Activated CD4-positive, alpha-beta memory T cell treated with anti-CD3 and anti-CD28 coated beads, Interleukin-2, amount 10 ng/mL, durations not matched to agents 7 days and 5 days (primary cell): ENCODE measurements at regions of chr4 and their contacts with region 1.

Region 1: DNA sequence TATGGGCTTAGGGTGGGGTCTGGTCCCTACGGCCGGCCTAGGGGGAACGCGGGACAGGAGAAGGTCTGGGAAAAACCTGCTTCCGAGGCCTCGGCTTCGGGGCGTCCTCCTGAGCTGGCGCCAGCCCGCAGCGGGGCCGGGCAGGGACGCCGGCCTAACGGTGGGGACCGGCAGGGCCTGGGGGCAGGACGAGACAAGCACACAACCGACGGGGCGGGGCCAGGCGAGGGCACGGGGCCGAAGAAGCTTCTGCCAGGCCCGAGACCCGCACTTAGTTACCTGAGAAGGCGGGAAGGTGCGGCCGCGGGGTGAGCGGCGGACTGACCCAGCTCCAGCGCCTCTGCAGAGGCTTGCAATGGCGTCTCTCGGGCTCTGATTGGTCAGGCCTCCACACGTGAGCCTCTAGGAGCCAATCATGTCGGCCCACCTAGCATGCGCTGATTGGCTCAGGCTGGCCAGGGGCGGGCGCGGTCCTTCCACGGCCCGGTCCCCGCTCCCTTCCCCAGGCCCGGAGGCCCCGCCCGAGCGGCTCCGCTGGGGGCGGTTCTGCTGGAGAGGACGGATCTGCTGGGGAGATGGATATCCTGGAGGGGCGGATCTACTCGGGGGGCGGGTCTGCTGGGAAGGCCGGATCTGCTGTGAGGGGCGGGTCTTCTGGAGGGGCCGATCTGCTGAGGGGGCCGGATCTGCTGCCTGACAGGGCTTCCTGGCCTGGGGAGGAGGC is 44.3 kb downstream of the CPLX1 start:
- DNase-seq: peak; percentile 100
- H3K4me3 Mint-ChIP-seq: peak overlapping the region; percentile 84
- H3K27ac Mint-ChIP-seq: peak overlapping the region; percentile 88
- H3K4me1 Mint-ChIP-seq: peaks cover 54% of the 10 kb centered on the region
- H3K27me3 Mint-ChIP-seq: peaks cover 16% of the 10 kb centered on the region

Region 2: DNA sequence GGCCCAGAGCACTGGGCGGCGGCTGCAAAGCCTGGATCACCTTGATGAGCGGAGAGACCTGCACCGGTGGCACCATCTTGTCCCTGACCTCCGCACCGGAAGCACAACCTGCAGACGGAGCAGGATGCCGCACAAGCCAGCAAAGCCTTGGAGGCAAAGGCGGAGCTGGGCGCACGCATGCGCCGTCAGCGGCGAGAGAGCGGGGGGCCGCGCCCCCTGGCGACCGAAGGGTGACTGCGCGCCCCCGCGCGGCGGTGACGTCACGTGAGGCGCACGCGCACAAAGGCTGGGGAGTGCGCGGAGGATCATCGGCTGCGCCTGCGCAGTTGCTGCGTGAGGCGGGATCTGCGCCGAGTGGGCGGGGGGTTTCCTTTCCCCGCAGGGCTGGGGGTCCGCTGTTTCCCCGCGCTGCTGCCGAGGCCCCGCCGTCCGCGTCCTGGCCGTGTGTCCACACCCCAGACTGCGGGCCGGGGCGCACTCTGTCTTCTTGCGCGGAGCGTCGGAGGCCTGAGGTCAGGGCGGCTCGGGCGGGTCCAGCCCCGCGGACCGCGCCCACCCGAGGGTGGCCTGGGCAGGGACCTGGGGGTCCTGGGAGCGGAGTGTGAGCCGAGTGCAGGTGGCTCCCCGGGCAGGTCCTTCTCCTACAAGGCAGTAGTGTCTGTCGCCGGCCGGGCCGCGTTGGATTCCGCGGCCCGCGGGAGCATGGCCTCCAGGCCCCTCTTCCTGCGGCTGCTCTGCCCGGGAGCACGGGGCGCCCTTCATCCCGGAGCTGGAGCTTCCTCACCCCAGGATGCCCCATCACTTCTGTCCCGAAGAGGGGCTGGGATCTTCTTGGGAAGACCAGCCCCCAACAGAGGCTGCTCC is 107.3 kb before region 1 on chr4 and contains the starts of genes ATP5ME and MYL5:
- CTCF ChIA-PET with region 1: interaction called, 4 read pairs
- POLR2A ChIA-PET with region 1: interaction called, 17 read pairs
- DNase-seq: peak; percentile 98
- H3K4me3 Mint-ChIP-seq: peak within 1 kb of the TSS; percentile 85
- H3K27ac Mint-ChIP-seq: peak within 1 kb of the TSS; percentile 80
- H3K4me1 Mint-ChIP-seq: peaks cover 13% of the 10 kb centered on the region
- H3K27me3 Mint-ChIP-seq: no peaks in the 10 kb centered on the region
- total RNA-seq, gene ATP5ME: 205 TPM
- total RNA-seq, gene MYL5: 14.0 to 16.2 TPM

Region 3: DNA sequence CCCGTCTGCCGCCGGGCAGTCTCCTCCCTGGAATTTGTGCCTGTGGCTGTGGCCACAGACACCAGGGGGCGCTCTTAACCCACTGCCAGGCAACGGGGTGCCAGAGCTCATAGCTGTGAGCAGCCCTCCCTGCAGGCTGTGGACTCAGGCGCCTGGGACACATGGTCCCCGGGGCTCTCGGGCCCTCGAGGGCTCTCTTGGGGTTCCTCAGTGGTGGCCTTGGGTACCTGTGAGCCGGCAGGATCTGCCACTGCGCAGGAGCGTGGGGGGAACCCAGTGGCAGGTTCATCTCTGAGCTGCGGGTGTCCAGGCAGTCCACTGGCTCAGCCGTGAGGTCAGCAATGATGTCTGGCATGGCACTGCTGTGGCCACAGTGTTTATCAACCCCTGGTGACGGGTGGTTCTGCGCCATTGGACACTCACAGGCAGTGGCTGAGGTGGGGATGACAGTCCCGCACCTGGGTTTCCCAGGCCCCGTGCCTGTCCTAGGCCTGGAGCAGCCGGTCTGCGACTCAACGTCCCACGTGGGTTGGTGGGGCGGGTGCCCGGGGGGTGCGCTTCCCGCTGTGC is 38.8 kb before region 1 on chr4:
- CTCF ChIA-PET with region 1: interaction called, 10 read pairs
- POLR2A ChIA-PET with region 1: interaction called, 6 read pairs
- DNase-seq: peak; percentile 78
- H3K4me3 Mint-ChIP-seq: no peak overlapping the region
- H3K27ac Mint-ChIP-seq: no peak overlapping the region
- H3K4me1 Mint-ChIP-seq: peaks cover 3% of the 10 kb centered on the region
- H3K27me3 Mint-ChIP-seq: no peaks in the 10 kb centered on the region

Region 4: DNA sequence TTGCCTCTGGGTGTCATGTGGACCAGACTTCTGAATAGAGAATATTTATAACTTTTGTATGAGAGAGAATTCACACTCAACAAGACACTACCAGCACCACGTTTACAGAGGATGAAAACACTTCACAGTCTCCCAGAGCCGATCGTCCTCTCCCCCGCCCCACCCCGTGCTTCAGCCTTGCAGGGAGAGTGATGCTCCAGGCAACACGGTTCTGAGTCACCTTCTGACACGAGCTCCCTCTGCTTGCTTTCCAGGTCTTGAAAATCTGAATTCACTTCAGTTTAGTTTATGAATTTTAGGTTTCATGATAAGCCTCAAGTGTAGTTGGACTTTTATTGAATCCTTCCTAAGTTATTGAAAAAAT is 15.5 kb before region 1 on chr4:
- CTCF ChIA-PET with region 1: no interaction called
- POLR2A ChIA-PET with region 1: interaction called, 27 read pairs
- DNase-seq: no peak
- H3K4me3 Mint-ChIP-seq: no peak overlapping the region
- H3K27ac Mint-ChIP-seq: peak overlapping the region; percentile 45
- H3K4me1 Mint-ChIP-seq: peaks cover 28% of the 10 kb centered on the region
- H3K27me3 Mint-ChIP-seq: no peaks in the 10 kb centered on the region

Region 5: GRCh38 chr4:793941-794621 is 12.4 kb after region 1 on chr4:
- CTCF ChIA-PET with region 1: interaction called, 3 read pairs
- POLR2A ChIA-PET with region 1: interaction called, 24 read pairs
- DNase-seq: no peak
- H3K4me3 Mint-ChIP-seq: no peak overlapping the region
- H3K27ac Mint-ChIP-seq: no peak overlapping the region
- H3K4me1 Mint-ChIP-seq: peaks cover 30% of the 10 kb centered on the region
- H3K27me3 Mint-ChIP-seq: peaks cover 36% of the 10 kb centered on the region

Region 6: DNA sequence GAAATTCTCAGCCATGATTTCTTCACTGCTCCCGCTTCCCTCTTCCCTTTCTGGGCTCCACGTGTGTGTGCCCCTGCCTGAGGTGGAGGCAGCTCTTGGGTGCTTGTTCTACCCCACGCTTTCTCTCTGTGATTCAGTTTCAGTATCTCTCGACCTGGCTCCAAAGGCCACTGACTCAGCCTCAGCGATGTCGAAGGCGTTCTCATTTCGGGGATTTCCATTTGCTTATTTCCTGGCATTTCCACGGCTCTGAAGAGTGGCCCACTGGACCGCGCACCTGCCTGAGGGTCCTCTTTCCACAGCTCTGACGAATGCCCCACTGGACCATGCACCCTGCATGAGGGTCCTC is 98.0 kb after region 1 on chr4:
- CTCF ChIA-PET with region 1: no interaction called
- POLR2A ChIA-PET with region 1: interaction called, 11 read pairs
- DNase-seq: peak; percentile 68
- H3K4me3 Mint-ChIP-seq: peak overlapping the region; percentile 71
- H3K27ac Mint-ChIP-seq: peak overlapping the region; percentile 100
- H3K4me1 Mint-ChIP-seq: peaks cover 31% of the 10 kb centered on the region
- H3K27me3 Mint-ChIP-seq: no peaks in the 10 kb centered on the region

Region 7: GRCh38 chr4:931960-932712 is 150.5 kb after region 1 on chr4 and contains the starts of genes GAK and TMEM175:
- CTCF ChIA-PET with region 1: interaction called, 3 read pairs
- POLR2A ChIA-PET with region 1: interaction called, 26 read pairs
- DNase-seq: peak; percentile 98
- H3K4me3 Mint-ChIP-seq: peak within 1 kb of the TSS; percentile 92
- H3K27ac Mint-ChIP-seq: peak within 1 kb of the TSS; percentile 94
- H3K4me1 Mint-ChIP-seq: peaks cover 47% of the 10 kb centered on the region
- H3K27me3 Mint-ChIP-seq: no peaks in the 10 kb centered on the region
- total RNA-seq, gene GAK: 139 to 156 TPM
- total RNA-seq, gene TMEM175: 24.1 to 28.8 TPM